ENCODE measurements at regions of chr1 and their contacts with region 1.

Region 1: GRCh38 chr1:156104065-156104810 is 10.3 kb upstream of the LMNA start:
- DNase-seq: no peak
- H3K4me3 ChIP-seq: peak overlapping the region; percentile 29
- CTCF ChIP-seq: no peak

Region 2: GRCh38 chr1:155920717-155921116 is 183.5 kb before region 1 on chr1:
- CTCF ChIA-PET with region 1: no interaction called
- POLR2A ChIA-PET with region 1: no interaction called
- DNase-seq: no peak
- H3K4me3 ChIP-seq: no peak overlapping the region
- CTCF ChIP-seq: no peak

Region 3: DNA sequence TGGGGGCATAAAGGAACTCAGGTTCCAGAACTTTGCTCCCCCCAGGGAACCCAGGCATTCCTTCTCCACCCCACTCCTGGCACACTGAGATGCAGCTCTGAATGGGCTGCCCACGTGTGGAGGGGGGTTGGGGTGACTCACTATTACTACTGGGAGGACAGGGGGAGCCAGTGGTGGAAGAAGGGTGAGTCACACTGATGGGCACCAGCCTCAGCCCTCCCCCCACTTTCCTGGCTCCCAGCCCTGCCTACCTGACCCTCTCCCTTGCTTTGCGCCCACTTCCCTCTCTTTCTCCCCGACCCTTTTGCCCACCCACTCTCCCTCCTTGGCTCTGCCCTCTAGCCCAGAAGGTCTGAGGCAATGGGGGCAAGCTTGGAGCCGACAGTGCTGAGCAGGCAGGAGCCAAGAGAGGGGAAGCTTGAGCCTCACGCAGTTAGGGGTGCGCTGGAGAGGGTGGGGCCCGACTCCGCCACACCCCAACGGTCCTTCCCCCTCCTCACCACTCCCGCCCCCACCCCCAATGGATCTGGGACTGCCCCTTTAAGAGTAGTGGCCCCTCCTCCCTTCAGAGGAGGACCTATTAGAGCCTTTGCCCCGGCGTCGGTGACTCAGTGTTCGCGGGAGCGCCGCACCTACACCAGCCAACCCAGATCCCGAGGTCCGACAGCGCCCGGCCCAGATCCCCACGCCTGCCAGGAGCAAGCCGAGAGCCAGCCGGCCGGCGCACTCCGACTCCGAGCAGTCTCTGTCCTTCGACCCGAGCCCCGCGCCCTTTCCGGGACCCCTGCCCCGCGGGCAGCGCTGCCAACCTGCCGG is 10.1 kb after region 1 on chr1 and contains the start of gene LMNA:
- CTCF ChIA-PET with region 1: interaction called, 1,837 read pairs
- POLR2A ChIA-PET with region 1: interaction called, 60 read pairs
- DNase-seq: peak; percentile 78
- H3K4me3 ChIP-seq: peak within 1 kb of the TSS; percentile 100
- CTCF ChIP-seq: no peak

Region 4: DNA sequence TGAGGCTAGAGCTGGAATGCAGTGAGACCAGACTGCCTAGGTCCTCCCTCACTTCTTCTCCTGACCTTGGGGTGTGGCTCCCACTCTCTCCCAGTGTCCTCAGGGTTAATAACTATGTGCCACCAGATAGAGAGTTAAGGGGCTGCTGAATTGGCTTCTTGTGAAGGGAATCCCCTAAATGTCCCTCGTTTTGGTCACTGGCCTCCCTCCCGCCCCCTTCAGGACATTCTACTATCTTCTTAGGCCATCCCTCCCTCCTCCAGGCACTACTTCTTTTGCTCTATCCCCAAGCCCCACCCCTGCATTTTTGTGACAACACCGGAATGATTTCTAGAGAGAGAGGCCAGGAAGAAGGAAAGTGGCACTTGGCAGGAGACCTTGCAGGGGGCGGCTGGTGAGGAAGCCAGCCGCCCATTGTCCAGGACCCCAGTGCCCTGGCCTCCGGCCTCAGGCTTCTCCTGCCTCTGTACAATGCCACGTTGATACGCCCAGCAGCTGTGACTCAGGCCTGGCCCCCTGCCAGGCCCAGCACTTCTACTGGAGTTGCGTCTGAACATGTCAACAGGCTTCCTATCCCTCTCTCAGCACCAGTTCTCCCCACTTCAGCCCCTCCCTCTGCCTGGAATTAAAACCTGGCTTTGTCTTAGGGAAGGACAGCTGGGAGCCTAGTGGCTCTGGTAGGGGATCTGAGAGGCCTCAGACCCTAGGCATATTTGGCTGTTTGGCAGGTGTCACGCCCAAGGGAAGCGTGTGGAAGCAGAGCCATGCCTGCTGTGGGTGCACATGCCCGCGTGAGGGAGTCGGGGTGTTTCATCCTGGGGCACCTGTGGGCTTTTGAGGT is 19.3 kb after region 1 on chr1:
- CTCF ChIA-PET with region 1: interaction called, 1,837 read pairs
- POLR2A ChIA-PET with region 1: interaction called, 62 read pairs
- DNase-seq: peak; percentile 89
- H3K4me3 ChIP-seq: peak overlapping the region; percentile 50
- CTCF ChIP-seq: peak; percentile 46

Region 5: GRCh38 chr1:156129706-156130581 is 25.7 kb after region 1 on chr1:
- CTCF ChIA-PET with region 1: interaction called, 1,837 read pairs
- POLR2A ChIA-PET with region 1: interaction called, 62 read pairs
- DNase-seq: peak; percentile 80
- H3K4me3 ChIP-seq: peak overlapping the region; percentile 26
- CTCF ChIP-seq: peak; percentile 96